ENCODE measurements at regions of chr18 and their contacts with region 1.

Region 1: DNA sequence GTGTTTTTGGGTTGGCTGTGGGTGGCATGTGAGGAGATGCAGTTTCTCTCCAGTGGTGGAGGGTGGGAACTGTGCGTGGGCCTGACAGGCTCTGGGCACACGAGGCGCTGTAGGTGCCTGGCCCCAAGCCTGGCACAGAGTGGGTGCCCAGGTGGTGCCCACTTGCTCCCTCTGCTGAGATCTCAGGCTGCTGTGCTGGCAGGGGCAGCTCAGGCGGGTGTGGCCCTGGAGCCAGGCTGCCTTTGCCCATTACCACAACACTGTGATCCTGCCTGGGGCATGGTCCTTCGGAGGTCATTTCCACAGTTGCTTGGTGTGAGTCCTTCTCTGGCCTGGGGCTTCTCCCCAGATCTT is 20.4 kb downstream of the TSHZ1 start:
- DNase-seq: no peak
- H3K4me3 ChIP-seq: no peak overlapping the region
- H3K27ac ChIP-seq: peak overlapping the region; percentile 66
- H3K4me1 ChIP-seq: peaks cover 43% of the 10 kb centered on the region
- H3K27me3 ChIP-seq: no peaks in the 10 kb centered on the region
- CTCF ChIP-seq: no peak
- POLR2A ChIP-seq: no peak

Region 2: DNA sequence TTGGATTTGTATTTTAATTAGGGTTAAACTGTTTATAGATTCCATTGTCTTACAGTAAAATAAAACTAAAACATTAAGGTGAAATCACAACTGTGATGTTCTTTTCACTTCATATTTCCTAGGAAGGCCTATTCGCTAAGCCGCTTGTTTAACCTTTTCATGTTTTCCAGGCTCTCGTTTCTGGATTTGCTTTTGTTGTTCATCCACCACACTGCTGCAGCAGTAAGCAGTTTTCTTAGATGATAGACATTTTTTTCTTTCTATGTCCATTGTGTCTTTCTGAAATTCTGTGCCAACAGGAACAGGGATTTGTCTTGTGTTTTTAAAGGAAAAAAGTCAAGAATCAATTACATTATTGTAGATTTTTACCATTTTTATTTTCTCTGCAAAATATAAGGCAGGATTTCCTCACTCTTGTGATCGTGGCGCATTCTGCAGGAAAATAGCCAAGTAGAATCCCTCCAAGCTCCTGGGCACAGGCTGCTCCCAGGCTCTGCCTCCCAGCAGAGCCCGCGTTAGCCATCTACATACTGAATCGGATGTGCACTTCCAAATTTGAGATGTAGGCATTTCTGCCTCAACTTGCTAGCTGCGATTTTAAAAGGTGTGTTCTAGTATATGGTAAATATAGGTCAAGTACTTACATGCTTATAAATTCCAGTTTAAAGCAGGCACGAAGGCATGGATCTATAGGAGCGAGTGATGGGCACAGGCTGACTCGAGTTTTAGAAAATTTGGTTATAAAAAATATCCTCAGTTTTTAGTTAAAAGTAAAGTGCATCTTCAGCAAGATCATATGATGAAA is 10.3 kb before region 1 on chr18:
- CTCF ChIA-PET with region 1: interaction called, 10 read pairs
- POLR2A ChIA-PET with region 1: interaction called, 3 read pairs
- dilution Hi-C with region 1: no loop called
- intact Hi-C with region 1: no loop called
- DNase-seq: no peak
- H3K4me3 ChIP-seq: no peak overlapping the region
- H3K27ac ChIP-seq: no peak overlapping the region
- H3K4me1 ChIP-seq: peaks cover 25% of the 10 kb centered on the region
- H3K27me3 ChIP-seq: no peaks in the 10 kb centered on the region
- CTCF ChIP-seq: no peak
- POLR2A ChIP-seq: no peak

Region 3: DNA sequence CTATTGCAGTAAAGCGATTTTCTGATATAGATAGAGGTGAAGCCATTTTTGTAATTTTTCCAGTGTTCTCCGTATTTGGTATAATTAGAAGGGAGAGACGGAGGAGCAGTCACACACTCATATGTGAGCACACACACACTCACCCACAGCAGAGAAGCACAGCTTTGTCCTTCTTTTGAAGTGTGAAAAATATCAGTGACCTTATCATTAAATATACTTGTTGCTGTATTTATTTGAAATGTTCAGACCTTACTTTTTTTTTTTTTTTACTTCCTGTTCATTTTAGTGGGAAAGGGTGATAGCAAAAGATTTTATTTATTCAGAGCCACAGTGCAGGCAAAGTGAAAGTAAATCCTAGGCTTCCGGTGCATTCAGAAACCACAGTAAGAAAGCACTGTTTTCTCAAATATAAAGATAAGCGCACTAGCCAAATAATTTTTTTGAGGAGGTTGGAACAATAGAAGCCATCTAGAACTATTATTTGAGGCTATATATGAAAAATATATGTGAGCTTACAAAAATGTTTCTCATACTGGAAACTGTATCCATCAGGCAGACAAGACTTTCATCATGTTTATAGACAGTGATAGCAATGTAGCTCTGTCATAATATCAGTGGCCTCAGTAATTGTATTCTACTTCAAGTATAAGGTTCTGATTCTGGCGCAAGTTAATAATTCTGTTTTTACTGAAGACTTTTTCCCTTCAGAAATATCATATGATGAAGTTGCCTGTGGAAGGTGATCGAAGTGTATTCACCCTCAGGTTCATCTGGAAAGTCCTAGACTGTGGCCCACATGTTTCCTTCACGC is 16.8 kb after region 1 on chr18:
- CTCF ChIA-PET with region 1: interaction called, 7 read pairs
- POLR2A ChIA-PET with region 1: no interaction called
- dilution Hi-C with region 1: no loop called
- intact Hi-C with region 1: loop called (anchors 1 kb)
- DNase-seq: peak; percentile 86
- H3K4me3 ChIP-seq: peak overlapping the region; percentile 8 to 79 (median 61)
- H3K27ac ChIP-seq: peak overlapping the region; percentile 78
- H3K4me1 ChIP-seq: peaks cover 27% of the 10 kb centered on the region
- H3K27me3 ChIP-seq: no peaks in the 10 kb centered on the region
- CTCF ChIP-seq: no peak
- POLR2A ChIP-seq: no peak

Region 4: GRCh38 chr18:75369026-75369721 is 138.1 kb after region 1 on chr18:
- CTCF ChIA-PET with region 1: no interaction called
- POLR2A ChIA-PET with region 1: no interaction called
- dilution Hi-C with region 1: no loop called
- intact Hi-C with region 1: loop called (anchors 1 kb)
- DNase-seq: no peak
- H3K4me3 ChIP-seq: no peak overlapping the region
- H3K27ac ChIP-seq: no peak overlapping the region
- H3K4me1 ChIP-seq: no peaks in the 10 kb centered on the region
- H3K27me3 ChIP-seq: no peaks in the 10 kb centered on the region
- CTCF ChIP-seq: no peak
- POLR2A ChIP-seq: no peak